A549 (cell line): ENCODE measurements at regions of chr2 and their contacts with region 1.

Region 1: DNA sequence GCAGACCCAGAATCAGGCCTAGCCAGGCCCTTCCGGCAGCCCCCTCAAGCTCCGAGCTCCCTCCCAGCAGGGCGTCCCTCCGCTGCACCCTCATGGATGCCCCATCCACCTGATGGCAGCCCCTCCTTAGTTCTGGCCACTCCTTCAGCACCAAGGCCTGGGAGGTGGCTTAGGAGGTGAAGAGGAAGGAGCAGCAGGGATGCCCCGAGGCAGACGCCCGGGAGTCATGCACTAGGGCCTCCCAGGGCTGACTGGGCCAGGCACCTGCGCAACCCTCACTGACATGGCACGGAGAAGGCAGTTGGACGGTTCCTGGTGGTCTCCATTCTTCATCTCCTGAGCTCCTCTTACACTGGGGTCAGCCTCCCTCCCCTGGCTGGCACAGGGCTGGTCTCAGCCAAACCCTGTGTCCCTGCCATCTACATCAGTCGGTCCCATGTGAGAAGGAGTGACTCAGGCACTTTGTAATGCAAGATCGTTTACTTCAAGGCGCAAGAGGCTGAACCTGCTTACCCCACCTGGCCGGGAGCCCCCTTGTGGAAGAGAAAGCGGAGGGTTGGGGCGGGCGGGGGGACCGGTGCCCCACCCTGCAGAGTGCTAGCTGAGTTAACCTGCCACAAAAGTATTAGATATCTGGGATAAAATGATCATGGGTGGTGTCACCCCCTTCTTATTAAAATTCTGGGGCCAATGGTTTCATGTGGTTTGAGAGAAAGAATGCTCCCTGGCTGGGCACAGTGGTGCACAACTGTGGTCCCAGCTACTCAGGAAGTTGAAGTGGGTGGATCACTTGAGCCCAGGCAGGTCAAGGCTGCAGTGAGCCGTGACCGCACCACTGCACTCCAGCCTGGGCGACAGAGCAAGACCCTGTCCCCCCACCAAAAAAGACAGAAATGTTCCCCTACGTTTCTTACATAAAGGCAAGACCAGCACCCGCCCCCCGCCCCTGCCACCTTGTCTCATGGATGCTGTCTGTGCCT is 53.3 kb upstream of the ID2 start:
- DNase-seq: peak; percentile 72 to 75
- ATAC-seq: peak; percentile 61 to 62
- H3K4me3 ChIP-seq: 0 out of 3 replicates have a peak overlapping the region, but pooled peaks have one; percentile 3
- H3K27ac ChIP-seq: peak overlapping the region; percentile 89 to 94
- H3K4me1 ChIP-seq: peaks cover 92% of the 10 kb centered on the region
- CTCF ChIP-seq: peak; percentile 49
- EP300 ChIP-seq: no peak
- POLR2A ChIP-seq: no peak
- RAD21 ChIP-seq: peak; percentile 20 to 61

Region 2: DNA sequence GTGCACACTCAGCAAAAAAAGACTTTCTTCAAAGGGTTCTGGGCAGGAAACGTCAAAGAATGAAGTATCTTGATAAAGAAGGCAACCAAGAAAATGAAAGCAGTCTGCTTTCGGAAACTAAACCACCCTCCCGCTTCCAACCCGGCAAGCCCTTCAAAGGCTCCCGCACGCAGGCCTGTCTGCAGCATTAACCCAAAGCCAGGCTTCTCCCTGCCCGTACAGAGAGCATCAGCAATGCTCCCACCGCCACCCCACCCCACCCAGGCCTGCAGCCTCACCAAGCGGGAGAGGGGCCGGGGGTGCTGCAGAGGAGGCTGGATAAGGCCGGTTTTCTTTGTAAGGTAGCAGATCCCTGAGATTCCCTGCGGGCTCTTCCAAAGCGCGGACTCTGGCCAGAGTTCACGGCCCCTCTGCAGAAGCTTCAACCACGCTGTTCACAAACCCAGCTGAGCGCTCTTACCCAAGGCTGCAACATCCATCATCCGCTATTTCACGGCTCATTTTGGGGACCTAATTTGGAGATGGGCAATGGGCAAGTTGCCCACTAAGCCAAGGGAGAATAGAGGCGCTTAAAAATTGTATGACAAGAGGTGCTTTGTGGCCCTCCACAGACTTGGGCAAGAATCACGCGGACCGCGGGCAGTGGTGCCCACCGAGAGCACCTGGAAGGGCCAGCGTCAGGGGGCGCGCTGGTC is 172.2 kb before region 1 on chr2:
- CTCF ChIA-PET with region 1: no interaction called
- POLR2A ChIA-PET with region 1: no interaction called
- DNase-seq: no peak
- ATAC-seq: no peak
- H3K4me3 ChIP-seq: no peak overlapping the region
- H3K27ac ChIP-seq: no peak overlapping the region
- H3K4me1 ChIP-seq: no peaks in the 10 kb centered on the region
- CTCF ChIP-seq: no peak
- EP300 ChIP-seq: no peak
- POLR2A ChIP-seq: no peak
- RAD21 ChIP-seq: no peak

Region 3: GRCh38 chr2:8606226-8606625 is 22.3 kb before region 1 on chr2:
- CTCF ChIA-PET with region 1: interaction called, 10 read pairs
- POLR2A ChIA-PET with region 1: no interaction called
- DNase-seq: no peak
- ATAC-seq: peak in 1 of 2 experiments; percentile 13; a peak in 3 of 6 replicates
- H3K4me3 ChIP-seq: no peak overlapping the region
- H3K27ac ChIP-seq: peak overlapping the region; percentile 61 to 74
- H3K4me1 ChIP-seq: peaks cover 43% of the 10 kb centered on the region
- CTCF ChIP-seq: no peak
- EP300 ChIP-seq: no peak
- POLR2A ChIP-seq: no peak
- RAD21 ChIP-seq: no peak

Region 4: DNA sequence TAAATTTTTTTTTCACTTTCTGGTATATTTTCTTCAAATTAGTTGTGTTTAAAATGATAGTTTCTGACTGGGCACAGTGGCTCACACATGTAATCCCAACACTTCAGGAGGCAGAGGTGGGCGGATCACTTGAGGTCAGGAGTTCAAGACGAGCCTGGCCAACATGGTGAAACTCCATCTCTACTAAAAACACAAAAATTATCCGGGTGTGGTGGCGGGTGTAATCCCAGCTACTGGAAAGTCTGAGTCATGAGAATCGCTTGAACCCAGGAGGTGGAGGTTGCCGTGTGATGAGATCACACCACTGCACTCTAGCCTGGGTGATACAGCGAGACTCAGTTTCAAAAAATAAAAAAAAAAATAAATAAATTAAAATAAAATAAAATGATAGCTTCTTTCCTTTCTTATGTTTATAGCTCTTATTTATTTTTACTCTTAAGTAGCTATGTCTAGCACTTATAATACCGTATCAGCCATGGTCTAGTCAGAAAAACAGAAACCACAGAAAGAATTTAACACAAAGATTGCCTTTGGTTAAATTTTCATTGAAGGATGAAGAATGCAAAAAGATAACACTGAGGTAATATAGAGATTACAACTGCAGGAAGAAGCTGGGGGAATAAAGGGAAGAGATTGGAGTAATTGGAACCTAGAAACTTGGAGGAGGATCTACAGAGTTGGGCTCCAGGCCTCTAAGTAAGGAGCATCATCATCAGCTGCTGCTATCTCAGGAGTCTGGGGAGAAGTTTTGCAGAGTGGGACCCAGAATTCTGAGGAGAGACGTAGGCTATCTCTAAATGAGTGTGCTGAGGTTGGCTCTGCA is 429.6 kb after region 1 on chr2:
- CTCF ChIA-PET with region 1: no interaction called
- POLR2A ChIA-PET with region 1: no interaction called
- DNase-seq: peak in 1 of 2 experiments; percentile 66
- ATAC-seq: no peak
- H3K4me3 ChIP-seq: no peak overlapping the region
- H3K27ac ChIP-seq: peak overlapping the region in 1 of 2 experiments; percentile 19; a peak in 1 of 6 replicates
- H3K4me1 ChIP-seq: peaks cover 8% of the 10 kb centered on the region; the same call in 1 of the 3 replicates
- CTCF ChIP-seq: no peak
- EP300 ChIP-seq: no peak
- POLR2A ChIP-seq: no peak
- RAD21 ChIP-seq: no peak